Activated CD4-positive, alpha-beta T cell treated with anti-CD3 and anti-CD28 coated beads for 36 hours (primary cell): ENCODE measurements at regions of chr5 and their contacts with region 1.

Region 1: DNA sequence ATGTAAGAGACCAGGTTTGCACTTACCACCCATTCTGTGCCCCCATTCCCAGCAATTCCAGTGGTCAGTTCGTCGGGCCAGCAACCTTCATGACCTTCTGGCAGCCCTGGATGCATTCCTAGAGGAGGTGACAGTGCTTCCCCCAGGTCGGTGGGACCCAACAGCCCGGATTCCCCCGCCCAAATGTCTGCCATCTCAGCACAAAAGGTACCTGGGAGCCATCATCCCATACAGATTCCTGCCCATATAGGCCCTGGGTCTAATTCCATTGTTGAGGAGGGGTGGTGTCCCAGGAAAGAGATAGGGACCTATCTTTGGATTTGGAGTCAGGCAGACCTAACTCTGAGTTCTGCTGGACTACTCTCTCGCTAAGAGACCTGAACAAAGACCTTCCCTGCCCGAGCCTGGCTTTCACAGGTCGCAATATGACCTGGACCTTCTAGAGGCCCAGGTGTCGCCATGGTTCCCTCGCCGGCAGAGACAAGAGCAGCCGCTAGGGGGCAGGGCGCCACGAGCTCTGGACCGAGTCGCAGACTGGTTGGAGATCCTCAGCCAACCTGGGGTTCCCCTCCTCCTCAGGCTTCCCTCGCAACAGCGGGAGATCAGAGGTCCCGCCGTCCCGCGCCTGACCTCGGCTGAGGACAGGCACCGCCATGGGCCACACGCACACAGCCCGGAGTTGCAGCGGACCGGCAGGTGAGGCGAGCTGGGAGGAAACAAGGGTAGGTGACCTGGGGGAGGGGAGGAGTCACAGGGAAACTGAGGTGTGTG is 3.1 kb downstream of the SLC4A9 start:
- DNase-seq: peak; percentile 93
- ATAC-seq: peak; percentile 95
- H3K4me3 Mint-ChIP-seq: peak overlapping the region; percentile 70
- H3K27ac Mint-ChIP-seq: peak overlapping the region; percentile 61
- H3K4me1 Mint-ChIP-seq: peaks cover 11% of the 10 kb centered on the region
- H3K27me3 Mint-ChIP-seq: peaks cover 5% of the 10 kb centered on the region

Region 2: GRCh38 chr5:140351609-140352334 is 11.3 kb before region 1 on chr5:
- CTCF ChIA-PET with region 1: interaction called, 16 read pairs
- POLR2A ChIA-PET with region 1: no interaction called
- intact Hi-C with region 1: no loop called
- DNase-seq: peak; percentile 65
- ATAC-seq: peak; percentile 90
- H3K4me3 Mint-ChIP-seq: no peak overlapping the region
- H3K27ac Mint-ChIP-seq: no peak overlapping the region
- H3K4me1 Mint-ChIP-seq: peaks cover 7% of the 10 kb centered on the region
- H3K27me3 Mint-ChIP-seq: no peaks in the 10 kb centered on the region

Region 3: GRCh38 chr5:140381972-140382371 is 18.9 kb after region 1 on chr5:
- CTCF ChIA-PET with region 1: interaction called, 12 read pairs
- POLR2A ChIA-PET with region 1: interaction called, 3 read pairs
- intact Hi-C with region 1: no loop called
- DNase-seq: peak; percentile 54
- ATAC-seq: peak; percentile 100
- H3K4me3 Mint-ChIP-seq: no peak overlapping the region
- H3K27ac Mint-ChIP-seq: no peak overlapping the region
- H3K4me1 Mint-ChIP-seq: peaks cover 14% of the 10 kb centered on the region
- H3K27me3 Mint-ChIP-seq: no peaks in the 10 kb centered on the region

Region 4: GRCh38 chr5:140432916-140433315 is 69.9 kb after region 1 on chr5:
- CTCF ChIA-PET with region 1: no interaction called
- POLR2A ChIA-PET with region 1: no interaction called
- intact Hi-C with region 1: no loop called
- DNase-seq: no peak
- ATAC-seq: no peak
- H3K4me3 Mint-ChIP-seq: no peak overlapping the region
- H3K27ac Mint-ChIP-seq: no peak overlapping the region
- H3K4me1 Mint-ChIP-seq: peaks cover 22% of the 10 kb centered on the region
- H3K27me3 Mint-ChIP-seq: no peaks in the 10 kb centered on the region

Region 5: DNA sequence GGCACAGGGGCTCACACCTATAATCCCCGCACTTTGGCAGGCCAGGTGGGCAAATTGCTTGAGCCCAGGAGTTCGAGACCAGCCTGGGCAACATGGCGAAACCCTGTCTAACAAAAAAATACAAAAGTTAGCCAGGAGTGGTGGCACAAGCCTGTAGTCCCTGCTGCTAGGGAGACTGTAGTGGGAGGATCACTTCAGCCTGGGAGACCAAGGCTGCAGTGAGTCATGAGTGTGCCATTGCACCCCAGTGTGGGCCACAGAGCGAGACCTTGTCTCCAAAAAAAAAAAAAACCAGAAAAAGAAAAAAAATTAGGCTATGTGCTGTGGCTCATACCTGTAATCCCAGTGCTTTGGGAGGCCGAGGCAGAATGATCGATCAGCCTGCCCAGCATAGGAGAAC is 125.9 kb after region 1 on chr5:
- CTCF ChIA-PET with region 1: no interaction called
- POLR2A ChIA-PET with region 1: no interaction called
- intact Hi-C with region 1: no loop called
- DNase-seq: no peak
- ATAC-seq: no peak
- H3K4me3 Mint-ChIP-seq: no peak overlapping the region
- H3K27ac Mint-ChIP-seq: no peak overlapping the region
- H3K4me1 Mint-ChIP-seq: no peaks in the 10 kb centered on the region
- H3K27me3 Mint-ChIP-seq: no peaks in the 10 kb centered on the region

Region 6: GRCh38 chr5:140632150-140633020 is 269.3 kb after region 1 on chr5:
- CTCF ChIA-PET with region 1: interaction called, 6 read pairs
- POLR2A ChIA-PET with region 1: no interaction called
- intact Hi-C with region 1: loop called in 1 of 2 experiments (anchors 2 kb)
- DNase-seq: peak; percentile 69
- ATAC-seq: peak; percentile 67
- H3K4me3 Mint-ChIP-seq: peak overlapping the region; percentile 74
- H3K27ac Mint-ChIP-seq: peak overlapping the region; percentile 73
- H3K4me1 Mint-ChIP-seq: peaks cover 31% of the 10 kb centered on the region
- H3K27me3 Mint-ChIP-seq: peaks cover 14% of the 10 kb centered on the region

Region 7: DNA sequence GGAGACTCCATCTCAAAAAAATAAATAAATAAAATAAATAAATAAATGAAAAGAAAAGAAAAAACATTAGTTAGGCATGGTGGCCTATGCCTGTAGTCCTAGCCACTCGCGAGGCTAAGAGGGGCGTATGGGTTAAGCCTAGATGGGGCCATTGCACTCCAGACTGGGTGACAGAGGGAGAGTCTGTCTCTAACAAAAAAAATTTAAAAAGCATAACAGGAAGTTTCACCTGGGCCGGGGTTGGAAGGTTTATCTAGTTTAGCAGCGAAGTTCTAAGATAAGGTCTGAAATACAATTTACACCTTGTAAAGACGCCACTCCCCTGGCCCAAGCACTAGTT is 355.2 kb after region 1 on chr5:
- CTCF ChIA-PET with region 1: interaction called, 9 read pairs
- POLR2A ChIA-PET with region 1: no interaction called
- intact Hi-C with region 1: loop called (anchors 1 to 2 kb)
- DNase-seq: no peak
- ATAC-seq: no peak
- H3K4me3 Mint-ChIP-seq: no peak overlapping the region
- H3K27ac Mint-ChIP-seq: no peak overlapping the region
- H3K4me1 Mint-ChIP-seq: peaks cover 4% of the 10 kb centered on the region
- H3K27me3 Mint-ChIP-seq: peaks cover 7% of the 10 kb centered on the region

Region 8: GRCh38 chr5:140725799-140726471 is 362.9 kb after region 1 on chr5:
- CTCF ChIA-PET with region 1: interaction called, 9 read pairs
- POLR2A ChIA-PET with region 1: no interaction called
- intact Hi-C with region 1: loop called in 1 of 2 experiments (anchors 2 kb)
- DNase-seq: peak; percentile 87
- ATAC-seq: peak; percentile 94
- H3K4me3 Mint-ChIP-seq: peak overlapping the region; percentile 67
- H3K27ac Mint-ChIP-seq: peak overlapping the region; percentile 45
- H3K4me1 Mint-ChIP-seq: peaks cover 11% of the 10 kb centered on the region
- H3K27me3 Mint-ChIP-seq: peaks cover 22% of the 10 kb centered on the region